Common myeloid progenitor, CD34-positive (primary cell): ENCODE measurements at regions of chr16 and their contacts with region 1.

Region 1: DNA sequence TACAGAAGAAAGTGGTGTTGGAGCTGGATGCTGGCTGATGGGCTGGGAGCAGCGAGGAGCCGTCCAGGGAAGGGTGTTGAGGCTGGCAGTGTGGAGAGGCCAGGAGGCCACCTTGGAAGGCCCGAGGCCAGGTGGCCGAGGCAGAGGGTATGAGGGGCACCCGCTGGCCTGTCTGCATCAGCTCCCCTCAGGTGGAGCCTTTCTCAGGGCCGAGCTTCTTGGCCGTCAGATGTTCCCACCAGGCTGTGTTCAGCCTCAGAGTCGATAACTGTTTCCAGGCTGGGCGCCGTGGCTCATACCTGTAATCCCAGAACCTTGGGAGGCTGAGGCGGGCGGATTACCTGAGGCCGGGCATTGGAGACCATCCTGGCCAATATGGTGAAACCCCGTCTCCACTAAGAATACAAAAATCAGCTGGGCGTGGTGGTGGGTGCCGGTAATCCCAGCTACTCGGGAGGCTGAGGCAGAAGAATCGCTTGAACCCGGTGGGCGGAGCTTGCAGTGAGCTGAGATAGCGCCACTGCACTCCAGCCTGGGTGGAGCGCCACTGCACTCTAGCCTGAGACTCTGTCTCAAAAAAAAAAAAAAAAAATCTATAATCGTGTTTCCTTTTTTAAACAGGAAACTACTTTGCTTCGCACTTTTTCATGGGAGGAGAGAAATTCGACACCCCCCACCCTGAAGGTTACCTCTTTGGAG is 25.3 kb downstream of the MGRN1 start:
- DNase-seq: peak in 1 of 3 donors; percentile 56
- H3K4me3 ChIP-seq: no peak overlapping the region
- H3K27ac ChIP-seq: no peak overlapping the region
- H3K4me1 ChIP-seq: peaks cover 0 to 9% (median 4%) of the 10 kb centered on the region in 4 experiments
- H3K27me3 ChIP-seq: no peaks in the 10 kb centered on the region

Region 2: DNA sequence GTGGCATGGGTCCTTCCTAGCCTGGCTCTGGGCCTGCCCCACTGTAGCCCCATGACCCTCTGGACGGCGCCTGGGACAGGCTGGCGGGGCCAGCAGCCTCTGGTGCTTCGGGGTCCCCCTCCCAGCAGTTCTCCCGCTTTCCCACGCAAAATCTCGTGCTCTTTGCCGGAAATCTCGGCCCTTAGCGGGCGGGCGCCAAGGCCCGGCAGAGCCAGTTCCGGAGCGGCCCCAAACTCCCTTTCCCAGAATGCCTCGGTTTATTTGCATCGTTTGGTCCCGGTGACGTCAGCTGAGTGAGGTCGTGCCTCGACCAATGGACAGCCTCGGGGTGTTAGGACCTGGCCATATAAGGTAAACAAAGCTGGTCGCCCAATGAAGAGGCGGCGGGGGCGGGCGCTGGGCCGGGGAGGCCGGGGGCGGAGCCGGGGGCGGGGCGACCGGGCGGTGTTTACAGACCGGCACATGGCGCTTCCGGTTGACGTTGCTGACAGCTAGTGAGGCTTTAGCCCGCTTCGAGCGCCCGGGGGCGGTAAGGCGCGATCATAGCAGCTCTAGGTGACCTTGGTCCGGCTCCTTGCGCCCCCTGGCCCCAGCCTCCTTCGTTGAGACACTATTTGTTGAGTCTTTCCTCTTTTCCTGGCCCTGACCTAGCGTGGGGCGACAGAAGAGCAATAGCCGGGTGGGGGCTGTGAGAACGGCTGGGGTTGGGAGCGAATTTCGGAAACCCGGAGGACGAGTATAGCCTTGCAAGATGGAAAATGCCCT is 33.7 kb before region 1 on chr16:
- CTCF ChIA-PET with region 1: interaction called, 12 read pairs
- POLR2A ChIA-PET with region 1: interaction called, 4 read pairs
- DNase-seq: peak; percentile 100
- H3K4me3 ChIP-seq: peak overlapping the region; percentile 26 to 90 (median 55)
- H3K27ac ChIP-seq: peak overlapping the region; percentile 62 to 94
- H3K4me1 ChIP-seq: peaks cover 2 to 55% (median 47%) of the 10 kb centered on the region in 4 experiments
- H3K27me3 ChIP-seq: no peaks in the 10 kb centered on the region

Region 3: GRCh38 chr16:4624015-4624826 is 25.7 kb before region 1 on chr16 and contains the start of gene MGRN1:
- CTCF ChIA-PET with region 1: interaction called, 27 read pairs
- POLR2A ChIA-PET with region 1: interaction called, 6 read pairs
- DNase-seq: peak; percentile 96 to 97 (median 97)
- H3K4me3 ChIP-seq: peak within 1 kb of the TSS; percentile 78 to 94 (median 90)
- H3K27ac ChIP-seq: peak within 1 kb of the TSS; percentile 98 to 99
- H3K4me1 ChIP-seq: peaks cover 0 to 27% (median 22%) of the 10 kb centered on the region in 4 experiments
- H3K27me3 ChIP-seq: no peaks in the 10 kb centered on the region

Region 4: GRCh38 chr16:4637501-4638166 is 12.3 kb before region 1 on chr16:
- CTCF ChIA-PET with region 1: interaction called, 15 read pairs
- POLR2A ChIA-PET with region 1: no interaction called
- DNase-seq: no peak
- H3K4me3 ChIP-seq: no peak overlapping the region
- H3K27ac ChIP-seq: no peak overlapping the region
- H3K4me1 ChIP-seq: peaks cover 0 to 29% (median 21%) of the 10 kb centered on the region in 4 experiments
- H3K27me3 ChIP-seq: no peaks in the 10 kb centered on the region

Region 5: GRCh38 chr16:4688335-4689021 is 38.6 kb after region 1 on chr16:
- CTCF ChIA-PET with region 1: no interaction called
- POLR2A ChIA-PET with region 1: no interaction called
- DNase-seq: no peak
- H3K4me3 ChIP-seq: no peak overlapping the region
- H3K27ac ChIP-seq: no peak overlapping the region
- H3K4me1 ChIP-seq: peaks cover 0 to 19% (median 12%) of the 10 kb centered on the region in 4 experiments
- H3K27me3 ChIP-seq: no peaks in the 10 kb centered on the region